Calu3 (cell line): ENCODE measurements at regions of chr19 and their contacts with region 1.

Region 1: GRCh38 chr19:50933640-50934039 is 19.2 kb downstream of the KLK5 start:
- DNase-seq: no peak
- H3K4me3 Mint-ChIP-seq: no peak overlapping the region
- H3K27ac Mint-ChIP-seq: peak overlapping the region; percentile 59
- H3K4me1 Mint-ChIP-seq: peaks cover 43% of the 10 kb centered on the region
- H3K27me3 Mint-ChIP-seq: no peaks in the 10 kb centered on the region
- CTCF ChIP-seq: no peak

Region 2: DNA sequence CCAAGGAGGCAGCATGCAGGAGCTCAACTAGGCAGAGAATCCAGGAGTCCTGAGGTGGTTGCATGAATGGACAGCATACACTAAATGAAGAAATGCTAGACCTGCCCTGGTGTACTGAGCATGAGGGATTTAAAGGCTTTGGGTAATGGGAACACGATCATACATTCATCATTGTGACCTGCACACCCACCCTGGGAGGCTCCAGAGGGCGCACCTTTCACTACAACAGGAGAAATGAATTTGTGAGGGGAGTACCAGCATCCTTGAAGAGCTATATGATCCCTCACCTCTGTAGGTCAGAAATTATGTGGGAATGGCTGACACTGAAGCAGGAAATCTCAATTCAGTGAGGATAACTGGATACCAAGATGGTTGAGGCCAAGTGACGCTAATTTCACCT is 51.5 kb before region 1 on chr19:
- CTCF ChIA-PET with region 1: no interaction called
- intact Hi-C with region 1: no loop called
- DNase-seq: no peak
- H3K4me3 Mint-ChIP-seq: no peak overlapping the region
- H3K27ac Mint-ChIP-seq: no peak overlapping the region
- H3K4me1 Mint-ChIP-seq: no peaks in the 10 kb centered on the region
- H3K27me3 Mint-ChIP-seq: peaks cover 90% of the 10 kb centered on the region
- CTCF ChIP-seq: no peak

Region 3: DNA sequence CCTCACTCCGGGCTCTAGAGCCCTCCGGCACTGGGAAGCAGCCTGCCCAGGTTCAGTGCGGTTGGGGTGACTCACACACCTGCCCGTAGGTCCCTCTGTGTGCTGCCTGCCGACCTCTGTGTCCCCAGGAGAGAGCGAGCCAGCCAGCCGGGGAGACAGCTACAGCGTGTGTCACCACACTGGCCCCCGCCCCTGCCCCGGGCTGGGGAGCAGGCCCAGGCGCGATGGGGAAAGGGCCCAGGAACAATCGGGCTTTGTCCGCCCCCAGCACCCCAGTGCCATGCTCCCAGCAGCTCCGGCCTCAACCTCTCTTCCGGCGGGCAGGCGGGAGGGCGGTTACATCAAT is 35.7 kb after region 1 on chr19 and contains the start of gene KLK6:
- CTCF ChIA-PET with region 1: interaction called, 6 read pairs
- intact Hi-C with region 1: loop called (anchors 2 kb)
- DNase-seq: peak; percentile 98
- H3K4me3 Mint-ChIP-seq: peak within 1 kb of the TSS; percentile 72
- H3K27ac Mint-ChIP-seq: peak within 1 kb of the TSS; percentile 81
- H3K4me1 Mint-ChIP-seq: peaks cover 67% of the 10 kb centered on the region
- H3K27me3 Mint-ChIP-seq: no peaks in the 10 kb centered on the region
- CTCF ChIP-seq: no peak
- total RNA-seq, gene KLK6: 269 and 350 TPM in 2 replicates